HEK293 (cell line): ENCODE measurements at regions of chrX and their contacts with region 1.

Region 1: DNA sequence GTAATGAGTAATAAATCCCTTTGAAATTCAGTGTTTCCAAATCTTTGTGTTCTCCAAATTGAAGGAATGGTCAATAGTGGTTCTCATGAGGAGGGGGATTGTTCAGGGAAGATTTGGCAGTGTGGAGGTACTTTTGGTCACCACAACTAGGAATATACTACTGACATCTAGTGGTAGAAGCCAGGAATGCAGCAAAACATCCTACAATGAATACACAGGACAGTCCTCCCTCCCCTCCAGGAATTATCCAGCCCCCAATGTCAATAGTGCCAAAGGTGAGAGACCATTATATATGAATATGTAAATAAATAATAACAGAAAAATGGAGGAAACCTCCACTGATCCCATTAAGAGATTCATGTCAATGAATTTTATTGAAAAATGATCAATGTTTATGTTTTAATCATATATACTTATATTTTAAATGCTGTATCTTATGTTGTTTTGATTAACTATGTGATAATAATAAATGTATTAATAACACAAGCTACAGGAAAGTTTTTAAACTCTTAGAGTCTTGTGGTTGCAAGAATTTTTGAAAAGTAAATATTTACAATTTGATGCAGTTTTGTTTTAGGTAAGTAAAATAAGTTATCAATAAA is 14.4 kb upstream of the FAM9A start:
- H3K4me3 ChIP-seq: no peak overlapping the region
- H3K27ac ChIP-seq: no peak overlapping the region
- H3K4me1 ChIP-seq: no peaks in the 10 kb centered on the region
- CTCF ChIP-seq: no peak

Region 2: GRCh38 chrX:7925867-7926472 is 889.6 kb before region 1 on chrX:
- CTCF ChIA-PET with region 1: no interaction called
- POLR2A ChIA-PET with region 1: no interaction called
- H3K4me3 ChIP-seq: no peak overlapping the region
- H3K27ac ChIP-seq: no peak overlapping the region
- H3K4me1 ChIP-seq: no peaks in the 10 kb centered on the region
- CTCF ChIP-seq: no peak

Region 3: GRCh38 chrX:8741981-8742380 is 73.6 kb before region 1 on chrX:
- CTCF ChIA-PET with region 1: interaction called, 10 read pairs
- POLR2A ChIA-PET with region 1: no interaction called
- H3K4me3 ChIP-seq: no peak overlapping the region
- H3K27ac ChIP-seq: no peak overlapping the region
- H3K4me1 ChIP-seq: no peaks in the 10 kb centered on the region
- CTCF ChIP-seq: no peak

Region 4: GRCh38 chrX:8748855-8749254 is 66.7 kb before region 1 on chrX:
- CTCF ChIA-PET with region 1: interaction called, 22 read pairs
- POLR2A ChIA-PET with region 1: no interaction called
- H3K4me3 ChIP-seq: no peak overlapping the region
- H3K27ac ChIP-seq: no peak overlapping the region
- H3K4me1 ChIP-seq: no peaks in the 10 kb centered on the region
- CTCF ChIP-seq: no peak